ENCODE measurements at regions of chr3 and their contacts with region 1.

Region 1: GRCh38 chr3:39288300-39288808 is 8.5 kb upstream of the CX3CR1 start:
- DNase-seq: peak; percentile 94
- ATAC-seq: peak; percentile 98
- H3K4me3 Mint-ChIP-seq: no peak overlapping the region
- H3K27ac Mint-ChIP-seq: no peak overlapping the region
- H3K4me1 Mint-ChIP-seq: peaks cover 5% of the 10 kb centered on the region
- H3K27me3 Mint-ChIP-seq: no peaks in the 10 kb centered on the region
- CTCF ChIP-seq: peak; percentile 47; the same call in 1 of the 2 replicates

Region 2: DNA sequence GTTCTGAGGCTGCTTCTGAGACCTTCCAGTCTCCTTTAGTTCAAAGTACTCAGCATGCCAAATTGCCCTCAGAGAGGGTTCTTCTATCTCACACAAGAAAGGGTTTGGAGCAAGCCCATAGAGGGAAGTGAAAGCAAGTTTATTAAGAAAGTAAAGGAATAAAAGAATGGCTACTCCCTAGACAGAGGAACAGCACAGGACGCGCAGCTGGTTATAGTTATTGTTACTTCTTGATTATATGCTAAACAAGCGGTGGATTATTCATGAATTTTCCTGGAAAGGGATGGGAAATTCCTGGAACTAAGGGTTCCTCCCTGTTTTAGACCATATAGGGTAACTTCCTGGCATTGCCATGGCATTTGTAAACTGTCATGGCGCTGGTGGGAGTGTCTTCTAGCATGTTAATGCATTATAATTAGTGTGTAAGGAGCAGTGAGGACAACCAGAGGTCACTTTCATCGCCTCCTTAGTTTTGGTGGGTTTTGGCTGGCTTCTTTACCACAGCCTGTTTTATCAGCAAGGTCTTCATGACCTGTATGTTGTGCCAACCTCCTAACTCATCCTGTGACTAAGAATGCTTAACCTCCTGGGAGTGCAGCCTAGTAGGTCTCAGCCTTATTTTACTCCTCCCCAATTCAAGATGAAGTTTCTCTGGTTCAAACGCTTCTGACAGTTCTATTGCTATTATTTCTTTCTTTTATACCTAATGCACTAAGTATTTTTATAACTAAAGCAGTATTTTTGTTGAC is 263.0 kb before region 1 on chr3:
- CTCF ChIA-PET with region 1: interaction called, 10 read pairs
- POLR2A ChIA-PET with region 1: no interaction called
- DNase-seq: no peak
- ATAC-seq: no peak
- H3K4me3 Mint-ChIP-seq: no peak overlapping the region
- H3K27ac Mint-ChIP-seq: no peak overlapping the region
- H3K4me1 Mint-ChIP-seq: no peaks in the 10 kb centered on the region
- H3K27me3 Mint-ChIP-seq: no peaks in the 10 kb centered on the region
- CTCF ChIP-seq: no peak

Region 3: DNA sequence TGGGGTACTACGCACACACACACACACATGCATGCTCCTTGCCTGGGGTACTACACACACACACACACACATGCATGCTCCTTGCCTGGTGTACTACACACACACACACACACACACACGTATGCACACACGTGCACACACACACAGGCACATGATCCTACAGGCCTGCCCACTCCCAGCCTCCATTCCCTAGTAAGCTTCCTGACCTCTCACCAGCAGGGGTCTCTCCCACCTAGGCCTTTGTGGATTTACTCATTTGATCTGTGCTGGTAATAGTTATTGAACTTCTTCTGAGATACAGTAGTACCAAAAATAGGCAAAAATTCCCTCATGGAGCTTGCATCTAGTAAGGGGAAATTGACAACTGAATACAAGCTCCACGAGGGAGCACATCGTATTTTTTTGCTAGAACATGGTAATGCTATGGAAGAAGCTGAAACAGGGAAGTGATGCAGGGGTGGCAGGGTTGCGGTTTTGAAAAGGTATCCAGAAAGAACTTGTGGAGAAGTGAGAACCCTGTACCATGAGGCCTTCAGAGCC is 161.8 kb before region 1 on chr3:
- CTCF ChIA-PET with region 1: interaction called, 260 read pairs
- POLR2A ChIA-PET with region 1: interaction called, 7 read pairs
- DNase-seq: peak; percentile 60
- ATAC-seq: peak; percentile 84
- H3K4me3 Mint-ChIP-seq: no peak overlapping the region
- H3K27ac Mint-ChIP-seq: no peak overlapping the region
- H3K4me1 Mint-ChIP-seq: peaks cover 5% of the 10 kb centered on the region; the same call in 1 of the 2 replicates
- H3K27me3 Mint-ChIP-seq: no peaks in the 10 kb centered on the region
- CTCF ChIP-seq: no peak

Region 4: GRCh38 chr3:39180546-39181346 is 107.6 kb before region 1 on chr3:
- CTCF ChIA-PET with region 1: interaction called, 53 read pairs
- POLR2A ChIA-PET with region 1: no interaction called
- DNase-seq: peak; percentile 87
- ATAC-seq: peak; percentile 86
- H3K4me3 Mint-ChIP-seq: peak overlapping the region; percentile 72
- H3K27ac Mint-ChIP-seq: peak overlapping the region; percentile 96
- H3K4me1 Mint-ChIP-seq: peaks cover 35% of the 10 kb centered on the region
- H3K27me3 Mint-ChIP-seq: peaks cover 22% of the 10 kb centered on the region
- CTCF ChIP-seq: no peak

Region 5: GRCh38 chr3:39216176-39216790 is 72.1 kb before region 1 on chr3:
- CTCF ChIA-PET with region 1: interaction called, 31 read pairs
- POLR2A ChIA-PET with region 1: no interaction called
- DNase-seq: no peak
- ATAC-seq: no peak
- H3K4me3 Mint-ChIP-seq: no peak overlapping the region
- H3K27ac Mint-ChIP-seq: no peak overlapping the region
- H3K4me1 Mint-ChIP-seq: peaks cover 6% of the 10 kb centered on the region
- H3K27me3 Mint-ChIP-seq: no peaks in the 10 kb centered on the region
- CTCF ChIP-seq: no peak

Region 6: GRCh38 chr3:39267631-39268548 is 20.5 kb before region 1 on chr3:
- CTCF ChIA-PET with region 1: interaction called, 213 read pairs
- POLR2A ChIA-PET with region 1: no interaction called
- DNase-seq: no peak
- ATAC-seq: no peak
- H3K4me3 Mint-ChIP-seq: no peak overlapping the region
- H3K27ac Mint-ChIP-seq: no peak overlapping the region
- H3K4me1 Mint-ChIP-seq: peaks cover 3% of the 10 kb centered on the region; the same call in 1 of the 2 replicates
- H3K27me3 Mint-ChIP-seq: no peaks in the 10 kb centered on the region; the same call in 1 of the 2 replicates
- CTCF ChIP-seq: no peak